Right cardiac atrium (tissue), 5 donors: ENCODE measurements at regions of chr21 and their contacts with region 1.

Region 1: GRCh38 chr21:27700974-27701614 is 734.2 kb upstream of the ADAMTS5 start:
- DNase-seq: peak; percentile 85 to 94 (median 90)
- ATAC-seq: peak; percentile 81 to 89
- H3K4me3 ChIP-seq: no peak overlapping the region
- H3K27ac ChIP-seq: no peak overlapping the region
- H3K4me1 ChIP-seq: no peaks in the 10 kb centered on the region
- H3K27me3 ChIP-seq: no peaks in the 10 kb centered on the region

Region 2: DNA sequence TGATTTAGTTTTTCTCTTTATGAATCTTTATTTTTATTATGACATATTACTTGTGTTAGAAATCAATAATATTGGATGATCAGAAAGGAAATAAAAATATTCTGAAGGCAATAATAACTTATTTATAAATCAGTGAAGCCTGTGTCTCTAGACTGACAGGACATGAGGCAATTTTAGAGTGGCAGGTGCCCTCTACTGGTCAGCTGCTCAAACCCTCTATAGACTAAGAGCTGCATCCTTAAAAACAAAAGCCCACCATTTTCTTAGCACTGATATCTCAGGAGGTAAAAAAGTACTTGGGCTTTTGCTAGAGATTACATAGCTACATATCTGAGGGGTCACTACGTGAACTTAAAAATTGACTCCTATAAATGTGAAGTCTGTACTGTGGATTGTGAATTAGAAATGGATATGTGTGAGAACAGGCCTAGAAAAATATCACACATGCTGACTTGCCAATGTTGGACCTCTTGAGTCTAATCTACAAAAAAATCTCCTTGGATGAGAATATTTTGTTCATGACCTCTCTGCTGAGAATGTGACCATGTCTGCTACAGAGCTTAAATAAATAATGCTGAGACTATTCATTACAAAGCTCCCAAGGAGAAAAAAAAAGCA is 136.3 kb before region 1 on chr21:
- intact Hi-C with region 1: loop called in 1 of 4 experiments (anchors 10 kb)
- DNase-seq: peak; percentile 39 to 61 (median 59)
- ATAC-seq: peak; percentile 72 to 80
- H3K4me3 ChIP-seq: no peak overlapping the region
- H3K27ac ChIP-seq: no peak overlapping the region
- H3K4me1 ChIP-seq: peaks cover under 1% of the 10 kb centered on the region
- H3K27me3 ChIP-seq: no peaks in the 10 kb centered on the region

Region 3: DNA sequence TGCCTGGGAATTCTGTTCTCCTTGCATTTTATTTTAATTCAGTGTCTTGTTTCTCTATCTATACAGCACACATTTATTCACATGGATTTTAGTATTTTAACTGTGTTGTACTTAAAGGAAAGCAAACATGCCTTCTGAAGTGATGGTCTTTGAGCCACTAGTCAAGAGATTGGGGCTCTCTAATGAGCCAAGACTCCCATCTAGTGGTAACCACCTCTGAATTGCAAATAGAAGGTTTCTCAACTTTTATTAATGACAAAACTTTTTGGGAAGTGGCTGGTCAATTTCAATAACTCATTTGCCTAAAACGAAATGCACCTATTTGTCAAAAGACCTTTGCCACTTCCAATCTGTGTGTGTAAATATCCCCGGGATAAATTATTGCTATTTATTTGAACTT is 1091.9 kb after region 1 on chr21:
- intact Hi-C with region 1: loop called in 1 of 4 experiments (anchors 10 kb)
- DNase-seq: no peak
- ATAC-seq: peak; percentile 39 to 66
- H3K4me3 ChIP-seq: no peak overlapping the region
- H3K27ac ChIP-seq: no peak overlapping the region
- H3K4me1 ChIP-seq: peaks cover 1% of the 10 kb centered on the region
- H3K27me3 ChIP-seq: no peaks in the 10 kb centered on the region